Right cardiac atrium (tissue), 5 donors: ENCODE measurements at regions of chrX and their contacts with region 1.

Region 1: GRCh38 chrX:70030301-70030767 is 19.4 kb downstream of the AWAT2 start:
- DNase-seq: peak in 1 of 3 donors; percentile 55
- ATAC-seq: peak; percentile 55 to 65
- H3K4me3 ChIP-seq: no peak overlapping the region
- H3K27ac ChIP-seq: no peak overlapping the region
- H3K4me1 ChIP-seq: peaks cover 3% of the 10 kb centered on the region
- H3K27me3 ChIP-seq: no peaks in the 10 kb centered on the region

Region 2: GRCh38 chrX:69538321-69538876 is 491.9 kb before region 1 on chrX:
- intact Hi-C with region 1: loop called in 3 of 4 experiments (anchors 2 to 10 kb)
- DNase-seq: peak; percentile 80 to 92 (median 90)
- ATAC-seq: peak; percentile 95 to 96
- H3K4me3 ChIP-seq: peak overlapping the region; percentile 33
- H3K27ac ChIP-seq: no peak overlapping the region
- H3K4me1 ChIP-seq: peaks cover 3% of the 10 kb centered on the region
- H3K27me3 ChIP-seq: no peaks in the 10 kb centered on the region

Region 3: DNA sequence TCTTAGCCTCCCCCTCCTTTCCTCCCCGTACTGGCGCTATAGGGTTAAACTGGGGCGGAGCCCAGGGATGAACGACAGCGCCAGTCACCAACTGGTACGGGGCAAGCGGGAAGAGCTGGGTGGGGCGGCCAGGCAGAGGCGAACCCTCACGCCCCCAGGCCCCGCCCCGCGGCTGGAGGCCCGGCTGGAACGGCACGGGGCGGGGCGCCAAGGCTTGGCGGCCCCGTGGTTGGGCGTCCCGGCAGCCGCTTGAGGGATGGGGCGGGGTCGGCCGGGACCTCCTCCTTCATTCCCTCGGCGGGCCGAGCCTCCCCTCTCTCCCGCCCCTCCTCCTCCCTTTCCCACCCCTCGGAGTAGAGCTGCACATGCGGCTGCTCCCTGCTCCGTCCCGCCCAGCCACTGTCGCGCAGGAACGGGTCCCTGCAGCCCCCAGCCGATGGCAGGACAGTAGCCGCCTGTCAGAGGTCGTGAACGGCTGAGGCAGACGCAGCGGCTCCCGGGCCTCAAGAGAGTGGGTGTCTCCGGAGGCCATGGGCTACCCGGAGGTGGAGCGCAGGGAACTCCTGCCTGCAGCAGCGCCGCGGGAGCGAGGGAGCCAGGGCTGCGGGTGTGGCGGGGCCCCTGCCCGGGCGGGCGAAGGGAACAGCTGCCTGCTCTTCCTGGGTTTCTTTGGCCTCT is 414.4 kb before region 1 on chrX and contains the start of gene EDA:
- intact Hi-C with region 1: loop called in 1 of 4 experiments (anchors 10 kb)
- DNase-seq: peak; percentile 90 to 96 (median 95)
- ATAC-seq: peak; percentile 99
- H3K4me3 ChIP-seq: peak within 1 kb of the TSS; percentile 82
- H3K27ac ChIP-seq: peak within 1 kb of the TSS; percentile 59
- H3K4me1 ChIP-seq: peaks cover 3% of the 10 kb centered on the region
- H3K27me3 ChIP-seq: no peaks in the 10 kb centered on the region
- total RNA-seq, gene EDA: 19.2 to 26.1 (median 22.3) TPM

Region 4: DNA sequence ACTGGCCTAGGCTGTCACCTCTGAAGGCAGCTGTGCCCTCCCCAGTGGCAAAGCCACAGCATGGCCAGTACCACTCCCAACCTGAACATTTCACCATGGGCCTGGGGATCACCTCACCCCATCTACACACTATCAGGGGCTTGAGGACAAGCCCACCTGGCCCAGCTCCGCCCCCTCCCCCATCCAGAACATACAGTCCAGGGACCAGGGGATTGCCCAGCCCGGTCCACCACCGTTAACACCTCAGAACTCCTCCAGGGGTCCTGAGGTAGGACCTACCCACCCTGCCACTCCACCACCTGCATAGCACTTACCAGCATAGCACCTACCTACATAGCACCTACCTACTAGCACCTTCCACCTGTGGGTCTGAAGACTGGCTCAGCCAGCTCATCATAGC is 234.6 kb before region 1 on chrX:
- intact Hi-C with region 1: no loop called
- DNase-seq: peak in 1 of 3 donors; percentile 11
- ATAC-seq: no peak
- H3K4me3 ChIP-seq: no peak overlapping the region
- H3K27ac ChIP-seq: no peak overlapping the region
- H3K4me1 ChIP-seq: no peaks in the 10 kb centered on the region
- H3K27me3 ChIP-seq: no peaks in the 10 kb centered on the region

Region 5: DNA sequence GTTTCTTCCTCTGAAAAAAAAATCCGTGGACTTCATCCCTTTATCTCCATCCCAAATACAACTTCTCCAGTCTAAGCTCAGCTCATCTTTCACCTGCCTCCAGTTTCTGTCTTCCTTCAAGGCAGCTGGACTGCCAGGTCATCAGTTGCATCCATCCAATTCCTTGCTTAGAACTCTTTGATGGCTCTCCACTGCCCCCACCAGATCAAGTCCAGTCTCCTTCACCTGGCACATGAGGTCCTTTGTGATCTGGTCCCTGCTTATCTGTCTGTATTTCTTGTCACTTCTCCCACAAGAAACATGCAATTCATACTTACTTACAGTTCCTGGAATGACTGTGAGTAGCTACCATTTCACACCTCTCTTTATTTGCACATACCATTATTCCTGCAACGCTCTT is 65.7 kb after region 1 on chrX:
- intact Hi-C with region 1: loop called (anchors 5 kb)
- DNase-seq: no peak
- ATAC-seq: no peak
- H3K4me3 ChIP-seq: no peak overlapping the region
- H3K27ac ChIP-seq: no peak overlapping the region
- H3K4me1 ChIP-seq: no peaks in the 10 kb centered on the region
- H3K27me3 ChIP-seq: no peaks in the 10 kb centered on the region